Activated T-helper 2 cell treated with anti-CD3 and anti-CD28 coated beads, Interferon-gamma antibody, Interleukin-2, Interleukin-4, amounts not matched to agents 10 μg/mL and 5 μg/mL and 100 μg/mL, durations not matched to agents 14 hours and 24 hours and 36 hours (primary cell): ENCODE measurements at regions of chr3 and their contacts with region 1.

Region 1: DNA sequence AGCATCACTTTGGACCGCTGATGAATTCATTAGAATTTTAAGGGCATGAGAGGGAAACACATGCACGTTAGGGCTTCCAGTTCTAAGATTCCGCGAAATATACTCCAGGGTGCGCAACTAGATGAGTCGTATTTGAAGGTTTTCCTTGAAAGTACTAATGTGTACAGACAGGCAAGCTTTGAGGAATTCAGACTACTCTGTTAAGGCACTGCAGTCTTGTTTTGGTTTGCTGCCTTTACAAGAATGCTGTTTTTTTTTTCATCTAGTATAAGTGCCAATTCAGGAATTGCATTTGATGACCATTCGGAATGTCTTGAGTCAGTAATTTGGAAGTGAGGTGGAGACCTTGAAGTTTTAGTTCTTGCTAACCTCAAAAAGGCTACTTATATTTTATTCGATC is 19.1 kb downstream of the TRNT1 start:
- DNase-seq: no peak
- H3K4me3 Mint-ChIP-seq: no peak overlapping the region
- H3K27ac Mint-ChIP-seq: no peak overlapping the region
- H3K4me1 Mint-ChIP-seq: peaks cover 19% of the 10 kb centered on the region
- H3K27me3 Mint-ChIP-seq: no peaks in the 10 kb centered on the region

Region 2: DNA sequence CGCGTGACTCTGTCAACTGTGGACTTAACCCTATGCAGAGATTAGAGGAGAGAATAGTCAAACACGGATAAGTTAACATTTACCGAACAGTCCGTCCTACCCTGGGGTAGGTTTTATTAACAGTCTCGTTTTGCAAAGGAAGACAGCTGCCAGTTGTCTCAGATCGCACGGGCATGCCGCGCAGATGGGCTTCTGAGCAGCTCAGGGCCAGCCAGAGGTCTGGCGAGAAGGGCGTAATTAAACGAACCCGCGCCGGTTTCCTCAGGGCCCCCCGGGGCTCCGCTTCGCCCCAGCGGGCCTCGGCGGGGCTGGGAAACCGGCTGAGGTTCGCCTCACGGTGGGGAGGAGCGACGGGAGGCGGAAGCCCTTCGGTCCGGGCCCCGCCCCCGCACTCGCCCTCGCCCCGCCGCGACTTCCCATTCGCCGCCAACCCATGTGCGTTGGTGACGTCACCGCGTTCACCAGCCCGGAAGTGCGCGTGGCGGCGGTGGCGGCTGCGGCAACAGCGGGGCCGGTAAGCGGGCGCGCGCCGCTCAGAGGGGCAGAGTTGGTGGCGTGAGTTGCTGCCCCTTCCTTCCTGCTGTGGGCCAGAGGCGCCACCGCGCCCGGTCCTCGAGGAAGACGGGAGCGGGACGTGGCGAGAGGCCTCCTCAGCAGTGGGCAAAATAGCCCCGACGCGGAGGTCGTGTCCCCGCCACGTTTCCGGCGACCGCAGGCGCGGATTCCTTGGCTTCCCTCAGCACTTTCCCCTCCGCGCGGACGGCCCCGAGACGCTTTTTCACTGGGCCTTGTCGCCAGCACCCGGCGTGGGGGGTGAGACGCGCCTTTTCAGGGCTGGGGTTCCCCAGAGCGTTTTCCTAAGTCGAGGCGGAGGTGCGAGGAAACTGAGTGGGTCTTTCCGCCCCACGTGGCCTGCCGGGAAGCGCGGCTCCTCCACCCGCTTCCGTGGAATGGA is 19.1 kb before region 1 on chr3 and contains the start of gene TRNT1:
- intact Hi-C with region 1: loop called (anchors 2 kb)
- DNase-seq: peak; percentile 93
- H3K4me3 Mint-ChIP-seq: peak within 1 kb of the TSS; percentile 96
- H3K27ac Mint-ChIP-seq: peak within 1 kb of the TSS; percentile 95
- H3K4me1 Mint-ChIP-seq: peaks cover 12% of the 10 kb centered on the region
- H3K27me3 Mint-ChIP-seq: no peaks in the 10 kb centered on the region
- total RNA-seq, gene TRNT1: 49.9 and 50.1 TPM in 2 replicates

Region 3: GRCh38 chr3:3179407-3180094 is 33.7 kb after region 1 on chr3 and contains the start of gene CRBN:
- intact Hi-C with region 1: no loop called
- DNase-seq: peak; percentile 85
- H3K4me3 Mint-ChIP-seq: peak within 1 kb of the TSS; percentile 95
- H3K27ac Mint-ChIP-seq: peak within 1 kb of the TSS; percentile 87
- H3K4me1 Mint-ChIP-seq: peaks cover 46% of the 10 kb centered on the region
- H3K27me3 Mint-ChIP-seq: no peaks in the 10 kb centered on the region
- total RNA-seq, gene CRBN: 35.0 and 40.6 TPM in 2 replicates